Activated CD4-positive, alpha-beta T cell treated with anti-CD3 and anti-CD28 coated beads for 36 hours (primary cell): ENCODE measurements at regions of chr15 and their contacts with region 1.

Region 1: GRCh38 chr15:22229971-22230815 is 149.9 kb downstream of the OR4M2 start:
- DNase-seq: no peak
- ATAC-seq: no peak
- H3K4me3 Mint-ChIP-seq: no peak overlapping the region
- H3K27ac Mint-ChIP-seq: no peak overlapping the region
- H3K4me1 Mint-ChIP-seq: no peaks in the 10 kb centered on the region
- H3K27me3 Mint-ChIP-seq: no peaks in the 10 kb centered on the region

Region 2: DNA sequence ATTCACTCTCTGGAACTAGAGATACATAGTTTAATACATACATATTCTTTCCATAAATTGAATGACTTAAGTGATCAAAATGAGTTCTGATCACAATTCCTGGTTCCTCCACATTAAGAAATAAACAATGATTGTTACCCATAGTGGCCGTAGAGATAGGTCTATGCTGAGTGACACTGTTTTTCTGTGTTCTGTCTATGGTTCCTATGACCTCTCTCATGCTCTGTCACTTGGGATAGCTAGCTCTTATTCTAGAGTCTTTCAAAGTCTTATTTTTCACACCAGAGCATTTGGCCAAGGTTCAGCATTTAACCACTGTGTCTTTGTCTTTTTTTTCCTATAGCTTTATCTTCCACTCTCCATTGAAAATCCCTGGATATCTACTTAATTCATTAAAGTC is 1820.9 kb before region 1 on chr15:
- CTCF ChIA-PET with region 1: no interaction called
- POLR2A ChIA-PET with region 1: no interaction called
- intact Hi-C with region 1: no loop called
- DNase-seq: no peak
- ATAC-seq: no peak
- H3K4me3 Mint-ChIP-seq: no peak overlapping the region
- H3K27ac Mint-ChIP-seq: no peak overlapping the region
- H3K4me1 Mint-ChIP-seq: no peaks in the 10 kb centered on the region
- H3K27me3 Mint-ChIP-seq: no peaks in the 10 kb centered on the region

Region 3: DNA sequence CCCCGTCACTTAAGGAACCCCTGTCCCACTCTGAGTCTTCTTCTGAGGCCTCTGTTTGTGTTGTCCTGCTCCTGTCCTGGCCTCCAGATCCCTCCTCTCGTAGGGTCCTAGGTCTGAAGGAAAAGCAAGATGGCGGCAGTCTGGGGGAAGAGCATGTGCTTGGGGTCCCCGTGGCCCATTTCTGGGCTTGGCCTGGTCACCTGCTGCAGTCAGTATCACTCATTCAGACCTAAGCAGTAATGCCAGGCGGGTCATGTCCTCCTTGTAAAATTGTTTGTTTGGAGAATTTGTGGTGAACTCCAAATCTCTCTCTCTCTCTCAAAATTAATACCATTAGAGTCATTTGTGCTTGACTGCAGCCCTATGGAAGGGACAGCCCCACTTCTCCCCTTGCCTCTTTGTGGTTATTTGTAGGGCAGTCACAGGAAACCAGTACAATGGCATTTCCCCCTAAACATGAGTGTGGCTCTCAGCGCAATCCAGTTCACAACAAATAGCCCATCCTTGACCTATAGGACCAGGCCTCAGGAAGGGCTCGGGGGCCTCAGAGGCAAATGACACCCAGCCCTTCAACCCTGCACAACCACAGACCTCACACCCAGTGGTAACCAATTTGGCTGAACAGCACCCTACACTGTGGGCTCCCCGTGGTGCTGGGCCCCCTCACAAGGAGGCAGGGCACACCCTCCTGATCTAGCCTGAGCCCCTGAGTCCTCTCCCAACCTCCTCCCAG is 23.6 kb after region 1 on chr15:
- CTCF ChIA-PET with region 1: no interaction called
- POLR2A ChIA-PET with region 1: no interaction called
- intact Hi-C with region 1: loop called in 1 of 2 experiments (anchors 2 kb)
- DNase-seq: peak; percentile 47
- ATAC-seq: peak; percentile 68
- H3K4me3 Mint-ChIP-seq: no peak overlapping the region
- H3K27ac Mint-ChIP-seq: peak overlapping the region; percentile 8
- H3K4me1 Mint-ChIP-seq: peaks cover 17% of the 10 kb centered on the region
- H3K27me3 Mint-ChIP-seq: peaks cover 24% of the 10 kb centered on the region